Activated naive CD8-positive, alpha-beta T cell treated with anti-CD3 and anti-CD28 coated beads, Interleukin-2, amount 10 ng/mL, durations not matched to agents 7 days and 5 days (primary cell): ENCODE measurements at regions of chr6 and their contacts with region 1.

Region 1: GRCh38 chr6:26122793-26123674 is 35.8 kb downstream of the HFE start:
- DNase-seq: peak; percentile 76
- ATAC-seq: peak; percentile 58
- H3K4me3 Mint-ChIP-seq: peak overlapping the region; percentile 99
- H3K27ac Mint-ChIP-seq: peak overlapping the region; percentile 100
- H3K4me1 Mint-ChIP-seq: peaks cover 40% of the 10 kb centered on the region
- H3K27me3 Mint-ChIP-seq: no peaks in the 10 kb centered on the region

Region 2: DNA sequence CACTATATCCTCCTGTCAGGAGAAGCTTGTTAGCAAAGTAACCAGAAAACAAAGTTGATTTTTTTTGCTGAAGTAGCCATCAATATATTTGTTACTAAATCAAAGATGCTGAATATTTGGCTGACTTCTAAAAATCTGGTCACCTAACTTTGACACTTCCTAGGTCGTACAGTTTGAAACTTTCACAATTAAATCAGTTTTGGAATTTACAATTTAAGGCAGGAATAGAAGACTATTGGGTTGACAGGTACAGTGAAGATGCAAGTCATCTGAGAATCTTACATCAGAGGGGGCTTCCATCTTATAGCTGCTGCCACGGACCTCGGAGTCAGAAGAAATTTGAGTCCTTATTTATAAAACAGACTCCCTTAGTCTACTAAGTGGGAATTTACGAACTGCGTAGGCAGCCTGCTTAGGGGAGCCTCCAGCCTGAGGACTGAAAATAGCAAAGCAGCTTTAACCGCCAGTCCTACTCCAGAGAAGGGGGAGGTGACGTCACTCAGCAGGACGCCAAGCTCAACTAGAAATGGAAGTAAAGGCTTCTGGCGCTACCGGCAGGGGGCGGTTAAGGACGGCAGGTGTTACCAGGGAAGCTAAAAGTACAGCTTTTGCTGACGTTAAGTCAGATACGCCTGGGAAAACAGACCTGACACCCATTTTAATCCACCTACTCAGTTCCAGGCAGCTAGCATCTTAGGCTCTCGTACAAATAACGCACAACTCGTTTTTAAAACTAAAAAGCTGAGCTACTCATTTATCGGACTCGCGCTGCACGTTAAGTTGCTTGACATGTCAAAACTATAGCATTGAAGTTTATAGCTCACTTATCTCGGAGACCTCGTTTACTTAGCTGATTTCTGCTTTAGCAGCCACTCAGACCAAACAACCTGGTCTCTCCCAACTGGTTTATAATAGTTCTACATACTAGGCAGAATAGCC is 96.9 kb before region 1 on chr6:
- POLR2A ChIA-PET with region 1: interaction called, 176 read pairs
- DNase-seq: peak; percentile 86
- ATAC-seq: peak; percentile 35
- H3K4me3 Mint-ChIP-seq: peak overlapping the region; percentile 89
- H3K27ac Mint-ChIP-seq: peak overlapping the region; percentile 99
- H3K4me1 Mint-ChIP-seq: peaks cover 75% of the 10 kb centered on the region
- H3K27me3 Mint-ChIP-seq: no peaks in the 10 kb centered on the region

Region 3: GRCh38 chr6:26087284-26088115 is 35.5 kb before region 1 on chr6 and contains the start of gene HFE:
- POLR2A ChIA-PET with region 1: interaction called, 21 read pairs
- DNase-seq: peak; percentile 65
- ATAC-seq: peak; percentile 9
- H3K4me3 Mint-ChIP-seq: peak within 1 kb of the TSS; percentile 86
- H3K27ac Mint-ChIP-seq: peak within 1 kb of the TSS; percentile 81
- H3K4me1 Mint-ChIP-seq: peaks cover 50% of the 10 kb centered on the region
- H3K27me3 Mint-ChIP-seq: no peaks in the 10 kb centered on the region
- total RNA-seq, gene HFE: 5.0 to 7.2 TPM

Region 4: GRCh38 chr6:26156076-26156849 is 33.2 kb after region 1 on chr6:
- POLR2A ChIA-PET with region 1: interaction called, 2,352 read pairs
- DNase-seq: peak; percentile 94
- ATAC-seq: peak; percentile 44
- H3K4me3 Mint-ChIP-seq: peak overlapping the region; percentile 100
- H3K27ac Mint-ChIP-seq: peak overlapping the region; percentile 99
- H3K4me1 Mint-ChIP-seq: peaks cover 43% of the 10 kb centered on the region
- H3K27me3 Mint-ChIP-seq: no peaks in the 10 kb centered on the region

Region 5: GRCh38 chr6:26204332-26205165 is 81.5 kb after region 1 on chr6:
- POLR2A ChIA-PET with region 1: interaction called, 396 read pairs
- DNase-seq: peak; percentile 84
- ATAC-seq: peak; percentile 64
- H3K4me3 Mint-ChIP-seq: no peak overlapping the region
- H3K27ac Mint-ChIP-seq: no peak overlapping the region
- H3K4me1 Mint-ChIP-seq: peaks cover 34% of the 10 kb centered on the region
- H3K27me3 Mint-ChIP-seq: no peaks in the 10 kb centered on the region

Region 6: DNA sequence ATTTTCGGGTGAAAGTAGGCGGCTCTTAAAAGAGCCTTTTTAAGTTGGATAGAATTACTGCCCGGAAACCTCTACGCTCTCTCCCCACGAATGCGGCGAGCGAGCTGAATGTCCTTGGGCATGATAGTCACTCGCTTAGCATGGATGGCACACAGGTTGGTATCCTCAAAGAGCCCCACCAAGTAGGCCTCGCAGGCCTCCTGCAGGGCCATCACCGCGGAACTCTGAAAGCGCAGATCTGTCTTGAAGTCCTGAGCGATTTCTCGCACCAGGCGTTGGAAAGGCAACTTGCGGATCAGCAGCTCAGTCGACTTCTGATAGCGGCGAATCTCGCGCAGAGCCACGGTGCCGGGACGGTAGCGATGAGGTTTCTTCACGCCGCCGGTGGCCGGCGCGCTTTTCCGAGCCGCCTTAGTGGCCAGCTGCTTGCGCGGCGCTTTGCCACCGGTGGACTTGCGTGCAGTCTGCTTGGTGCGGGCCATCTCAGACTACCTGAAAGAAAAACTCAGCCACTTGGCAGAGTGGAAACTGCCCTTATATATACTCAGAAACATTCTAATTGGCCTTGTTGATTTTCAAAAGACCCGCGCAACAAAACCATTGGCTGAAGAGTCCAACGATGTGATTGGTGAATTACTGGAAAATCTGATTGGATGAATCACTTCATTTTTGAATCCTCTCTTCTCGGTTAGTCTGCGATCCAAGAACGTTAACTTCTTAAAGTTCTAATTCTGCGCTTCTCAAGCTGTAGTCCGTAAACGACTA is 148.1 kb after region 1 on chr6:
- POLR2A ChIA-PET with region 1: interaction called, 91 read pairs
- DNase-seq: peak; percentile 80
- ATAC-seq: peak; percentile 38
- H3K4me3 Mint-ChIP-seq: no peak overlapping the region
- H3K27ac Mint-ChIP-seq: no peak overlapping the region
- H3K4me1 Mint-ChIP-seq: peaks cover 24% of the 10 kb centered on the region
- H3K27me3 Mint-ChIP-seq: no peaks in the 10 kb centered on the region

Region 7: DNA sequence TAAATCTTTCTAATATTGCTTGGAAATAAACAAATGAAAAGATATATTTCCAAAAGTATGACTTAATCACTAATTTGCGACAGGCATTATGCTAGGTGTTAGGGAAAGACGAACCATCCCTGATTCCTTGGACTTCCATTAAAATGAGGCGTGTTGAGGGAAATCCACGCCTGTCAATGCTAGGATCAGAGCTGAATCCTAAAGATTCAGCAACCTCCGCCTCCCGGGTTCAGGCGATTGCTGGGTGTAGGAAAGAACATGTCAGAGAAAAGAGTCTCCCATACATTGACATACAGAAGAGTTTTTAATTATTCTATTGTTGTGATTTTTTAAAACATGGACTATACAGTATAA is 1107.7 kb after region 1 on chr6:
- POLR2A ChIA-PET with region 1: no interaction called
- DNase-seq: no peak
- ATAC-seq: no peak
- H3K4me3 Mint-ChIP-seq: no peak overlapping the region
- H3K27ac Mint-ChIP-seq: no peak overlapping the region
- H3K4me1 Mint-ChIP-seq: peaks cover 7% of the 10 kb centered on the region
- H3K27me3 Mint-ChIP-seq: peaks cover 63% of the 10 kb centered on the region

Region 8: GRCh38 chr6:27809939-27810767 is 1687.1 kb after region 1 on chr6:
- POLR2A ChIA-PET with region 1: interaction called, 40 read pairs
- DNase-seq: peak; percentile 83
- ATAC-seq: peak; percentile 38
- H3K4me3 Mint-ChIP-seq: peak overlapping the region; percentile 89
- H3K27ac Mint-ChIP-seq: peak overlapping the region; percentile 97
- H3K4me1 Mint-ChIP-seq: peaks cover 52% of the 10 kb centered on the region
- H3K27me3 Mint-ChIP-seq: no peaks in the 10 kb centered on the region